Mammary epithelial cell (primary cell): ENCODE measurements at regions of chr1 and their contacts with region 1.

Region 1: DNA sequence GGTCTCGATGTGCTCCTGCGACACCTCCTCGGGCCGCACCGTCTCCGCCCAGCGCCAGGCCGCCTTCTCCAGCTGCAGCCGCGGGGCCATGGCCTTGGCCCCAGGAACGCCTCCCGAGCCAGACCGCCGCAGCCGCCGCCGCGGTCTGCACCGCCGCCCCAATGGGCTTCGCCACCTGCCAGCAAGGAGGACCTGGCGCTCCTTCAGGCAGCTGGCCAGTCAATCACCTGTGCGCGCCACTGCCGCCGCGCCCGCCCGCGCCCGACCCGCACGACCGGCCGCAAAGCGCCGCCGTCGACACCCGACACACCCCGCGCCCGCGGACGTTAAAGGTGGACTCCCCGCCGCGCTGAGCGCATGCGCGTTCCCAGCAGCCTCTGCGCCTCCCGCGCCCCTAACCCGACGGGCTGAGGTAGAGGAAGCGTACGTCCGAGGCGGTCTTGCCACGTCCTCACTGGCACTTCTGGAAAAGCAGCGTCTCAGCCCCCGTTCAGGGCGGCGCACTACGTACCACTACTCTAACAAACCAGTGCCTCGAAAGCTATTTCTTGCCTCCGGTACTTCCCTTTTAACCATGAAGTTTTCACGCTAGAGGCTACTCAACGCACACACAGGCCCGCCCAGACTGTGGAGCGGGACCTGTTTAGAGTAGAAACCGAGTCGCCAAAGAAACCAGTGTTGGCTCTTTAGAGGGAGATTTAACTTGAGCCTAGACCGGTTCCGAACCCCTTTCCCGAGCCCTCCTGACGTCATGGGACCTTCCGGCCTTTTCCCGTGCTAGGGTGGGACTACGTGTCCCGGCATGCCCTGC is at the start of gene USP48:
- DNase-seq: peak; percentile 95
- H3K4me3 ChIP-seq: peak within 1 kb of the TSS; percentile 84 to 94 (median 85)
- H3K27ac ChIP-seq: peak within 1 kb of the TSS; percentile 98
- H3K4me1 ChIP-seq: no peaks in the 10 kb centered on the region
- H3K27me3 ChIP-seq: no peaks in the 10 kb centered on the region
- CTCF ChIP-seq: no peak
- total RNA-seq, gene USP48: 33.3 to 53.5 TPM

Region 2: GRCh38 chr1:21703318-21703963 is 79.6 kb before region 1 on chr1:
- CTCF ChIA-PET with region 1: interaction called, 4 read pairs
- dilution Hi-C with region 1: no loop called
- in situ Hi-C with region 1: no loop called
- intact Hi-C with region 1: loop called (anchors 5 kb)
- DNase-seq: peak; percentile 23
- H3K4me3 ChIP-seq: no peak overlapping the region
- H3K27ac ChIP-seq: no peak overlapping the region
- H3K4me1 ChIP-seq: no peaks in the 10 kb centered on the region
- H3K27me3 ChIP-seq: no peaks in the 10 kb centered on the region
- CTCF ChIP-seq: peak; percentile 40 to 43

Region 3: GRCh38 chr1:21834094-21834493 is 51.0 kb after region 1 on chr1:
- CTCF ChIA-PET with region 1: no interaction called
- dilution Hi-C with region 1: no loop called
- in situ Hi-C with region 1: no loop called
- intact Hi-C with region 1: loop called (anchors 10 kb)
- DNase-seq: no peak
- H3K4me3 ChIP-seq: no peak overlapping the region
- H3K27ac ChIP-seq: no peak overlapping the region
- H3K4me1 ChIP-seq: no peaks in the 10 kb centered on the region
- H3K27me3 ChIP-seq: no peaks in the 10 kb centered on the region
- CTCF ChIP-seq: no peak

Region 4: GRCh38 chr1:21869620-21870121 is 86.6 kb after region 1 on chr1:
- CTCF ChIA-PET with region 1: no interaction called
- dilution Hi-C with region 1: no loop called
- in situ Hi-C with region 1: no loop called
- intact Hi-C with region 1: loop called (anchors 2 kb)
- DNase-seq: peak; percentile 95
- H3K4me3 ChIP-seq: no peak overlapping the region
- H3K27ac ChIP-seq: peak overlapping the region; percentile 5
- H3K4me1 ChIP-seq: peaks cover 40% of the 10 kb centered on the region
- H3K27me3 ChIP-seq: no peaks in the 10 kb centered on the region
- CTCF ChIP-seq: no peak

Region 5: GRCh38 chr1:21931171-21932093 is 148.4 kb after region 1 on chr1:
- CTCF ChIA-PET with region 1: no interaction called
- dilution Hi-C with region 1: loop called (anchors 10 kb)
- in situ Hi-C with region 1: no loop called
- intact Hi-C with region 1: loop called (anchors 1 kb)
- DNase-seq: peak; percentile 71
- H3K4me3 ChIP-seq: no peak overlapping the region
- H3K27ac ChIP-seq: peak overlapping the region; percentile 69
- H3K4me1 ChIP-seq: peaks cover 49% of the 10 kb centered on the region
- H3K27me3 ChIP-seq: no peaks in the 10 kb centered on the region
- CTCF ChIP-seq: no peak

Region 6: GRCh38 chr1:22001409-22001808 is 218.3 kb after region 1 on chr1 and contains the start of gene CELA3A:
- CTCF ChIA-PET with region 1: interaction called, 12 read pairs
- dilution Hi-C with region 1: no loop called
- in situ Hi-C with region 1: no loop called
- intact Hi-C with region 1: no loop called
- DNase-seq: no peak
- H3K4me3 ChIP-seq: no peak within 1 kb of the TSS
- H3K27ac ChIP-seq: no peak within 1 kb of the TSS
- H3K4me1 ChIP-seq: peaks cover 4% of the 10 kb centered on the region
- H3K27me3 ChIP-seq: no peaks in the 10 kb centered on the region
- CTCF ChIP-seq: no peak
- total RNA-seq, gene CELA3A: not detected